ENCODE measurements at regions of chr4 and their contacts with region 1.

Region 1: GRCh38 chr4:72468904-72469502 is 100.0 kb downstream of the ADAMTS3 start:
- DNase-seq: no peak
- H3K4me3 ChIP-seq: no peak overlapping the region
- H3K27ac ChIP-seq: no peak overlapping the region
- H3K4me1 ChIP-seq: peaks cover 0 to under 1% (median 0%) of the 10 kb centered on the region in 4 donors
- H3K27me3 ChIP-seq: no peaks in the 10 kb centered on the region
- CTCF ChIP-seq: peak; percentile 44 to 49

Region 2: DNA sequence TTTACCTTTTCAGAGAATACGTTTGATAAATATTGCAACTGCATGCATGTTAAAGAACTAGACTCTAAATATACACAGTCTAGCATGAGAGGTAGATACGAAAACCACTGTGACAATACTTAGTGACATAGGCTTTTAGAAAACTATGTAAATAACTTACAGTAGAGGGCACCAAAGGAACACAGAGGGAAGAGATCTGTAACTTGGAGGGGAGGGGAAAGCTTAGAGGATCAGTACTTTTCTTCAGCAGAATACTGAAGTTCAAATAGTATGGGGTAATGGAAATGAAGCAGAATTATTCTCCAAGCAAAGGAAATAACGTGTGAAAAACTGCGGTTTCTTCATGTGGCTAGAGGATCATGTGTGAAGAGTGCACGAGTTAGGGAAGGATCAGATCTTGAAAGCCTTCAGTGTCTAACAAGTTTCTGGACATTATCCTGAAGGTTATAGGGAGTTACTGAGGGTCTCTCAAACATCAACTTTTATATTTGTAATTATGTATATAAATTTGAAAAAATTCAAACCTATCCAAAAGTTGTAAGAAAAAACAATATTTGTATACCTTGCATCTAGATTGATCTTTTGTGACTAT is 172.9 kb before region 1 on chr4:
- intact Hi-C with region 1: loop called (anchors 10 kb)
- DNase-seq: no peak
- H3K4me3 ChIP-seq: no peak overlapping the region
- H3K27ac ChIP-seq: no peak overlapping the region
- H3K4me1 ChIP-seq: no peaks in the 10 kb centered on the region
- H3K27me3 ChIP-seq: no peaks in the 10 kb centered on the region
- CTCF ChIP-seq: peak; percentile 63 to 73

Region 3: GRCh38 chr4:72338060-72338459 is 130.9 kb before region 1 on chr4:
- intact Hi-C with region 1: loop called (anchors 10 kb)
- DNase-seq: no peak
- H3K4me3 ChIP-seq: no peak overlapping the region
- H3K27ac ChIP-seq: no peak overlapping the region
- H3K4me1 ChIP-seq: peaks cover 0 to 11% (median 0%) of the 10 kb centered on the region in 4 donors
- H3K27me3 ChIP-seq: no peaks in the 10 kb centered on the region
- CTCF ChIP-seq: no peak